Activated CD8-positive, alpha-beta memory T cell treated with anti-CD3 and anti-CD28 coated beads, Interleukin-2, amount 10 ng/mL, durations not matched to agents 7 days and 5 days (primary cell): ENCODE measurements at regions of chr9 and their contacts with region 1.

Region 1: DNA sequence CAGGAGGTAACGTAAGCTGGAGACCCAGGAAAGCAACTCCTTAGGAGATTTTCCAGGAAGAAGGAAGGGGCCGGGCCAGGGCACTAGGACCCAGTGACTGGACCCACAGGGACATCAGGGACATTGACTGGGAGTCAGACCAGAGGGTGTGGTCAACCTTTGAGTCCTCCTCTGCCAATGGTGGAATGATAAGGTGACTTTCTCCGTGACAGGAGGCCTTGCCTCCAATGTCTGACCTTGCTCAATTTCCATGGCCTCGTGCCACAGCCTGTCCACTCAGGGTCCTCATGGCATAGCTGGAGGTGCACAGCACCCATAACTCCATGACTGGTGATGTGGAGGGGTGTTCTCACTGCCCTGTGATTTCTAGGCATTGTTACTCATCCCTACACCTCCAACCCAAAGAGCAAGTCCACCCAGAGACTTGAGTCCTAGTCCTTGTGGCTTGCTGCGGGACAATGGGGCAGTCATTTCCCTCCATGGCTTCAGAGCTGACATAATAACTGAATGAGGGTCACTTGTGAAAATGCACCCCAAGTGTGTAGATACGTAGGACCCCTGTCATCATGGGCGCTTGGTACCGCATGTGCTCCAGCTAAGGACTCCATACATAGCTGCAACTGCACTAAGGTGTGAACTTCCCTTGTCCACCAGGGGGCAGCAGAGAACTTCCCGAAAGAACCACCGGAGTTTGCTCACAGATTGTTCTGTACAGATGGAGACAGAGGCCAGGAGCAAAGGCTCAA is 4.1 kb upstream of the AMBP start:
- DNase-seq: peak; percentile 86
- ATAC-seq: peak; percentile 90
- H3K4me3 Mint-ChIP-seq: no peak overlapping the region
- H3K27ac Mint-ChIP-seq: no peak overlapping the region
- H3K4me1 Mint-ChIP-seq: no peaks in the 10 kb centered on the region
- H3K27me3 Mint-ChIP-seq: peaks cover 3% of the 10 kb centered on the region

Region 2: DNA sequence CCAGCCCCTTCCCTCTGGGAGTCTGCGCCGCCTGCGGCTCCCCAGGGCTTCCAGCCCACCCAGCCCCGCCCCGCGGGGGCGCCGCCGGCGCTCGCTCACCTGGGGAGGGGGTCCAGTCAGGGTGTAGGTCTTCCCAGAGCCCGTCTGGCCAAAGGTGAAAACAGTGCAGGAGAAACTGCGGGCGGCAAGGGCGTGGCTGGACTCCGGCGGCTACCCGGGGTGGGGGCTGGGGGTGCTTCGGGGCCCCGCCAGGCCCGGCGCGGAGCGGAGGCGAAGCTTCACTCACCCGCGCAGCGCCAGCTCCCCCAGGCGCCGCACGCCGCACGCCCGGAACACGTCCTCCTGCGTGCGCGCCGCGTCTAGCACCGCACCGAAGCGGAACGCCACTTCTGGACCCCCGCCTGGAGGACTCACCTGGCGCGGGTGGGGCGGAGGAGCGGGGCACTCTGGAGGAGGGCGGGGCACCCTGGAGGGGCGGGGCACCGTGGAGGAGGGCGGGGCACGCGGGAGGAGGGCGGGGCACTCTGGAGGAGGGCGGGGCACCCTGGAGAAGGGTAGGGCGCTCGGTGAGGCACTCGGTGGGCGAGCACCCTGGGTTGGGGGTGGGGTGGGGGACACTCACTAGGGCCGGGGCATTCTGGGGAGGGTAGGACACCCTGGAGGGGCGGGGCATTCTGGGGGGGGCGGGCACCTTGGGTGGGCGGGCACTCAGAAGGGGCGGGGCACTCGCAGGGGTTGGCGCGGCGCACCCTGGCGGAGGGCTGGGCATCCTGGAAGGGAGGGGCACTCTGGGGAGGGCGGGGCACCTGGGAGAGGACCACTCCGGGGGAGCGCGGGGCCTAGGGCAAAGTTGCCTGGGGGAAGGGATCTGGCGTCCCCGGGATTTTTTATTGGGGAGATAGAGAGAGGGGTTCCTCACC is 16.1 kb after region 1 on chr9:
- CTCF ChIA-PET with region 1: interaction called, 18 read pairs
- DNase-seq: peak; percentile 44
- ATAC-seq: peak; percentile 72
- H3K4me3 Mint-ChIP-seq: no peak overlapping the region
- H3K27ac Mint-ChIP-seq: no peak overlapping the region
- H3K4me1 Mint-ChIP-seq: no peaks in the 10 kb centered on the region
- H3K27me3 Mint-ChIP-seq: peaks cover 35% of the 10 kb centered on the region

Region 3: GRCh38 chr9:114108016-114108833 is 26.0 kb after region 1 on chr9:
- CTCF ChIA-PET with region 1: interaction called, 18 read pairs
- DNase-seq: peak; percentile 71
- ATAC-seq: peak; percentile 86
- H3K4me3 Mint-ChIP-seq: no peak overlapping the region
- H3K27ac Mint-ChIP-seq: no peak overlapping the region
- H3K4me1 Mint-ChIP-seq: no peaks in the 10 kb centered on the region
- H3K27me3 Mint-ChIP-seq: peaks cover 23% of the 10 kb centered on the region

Region 4: DNA sequence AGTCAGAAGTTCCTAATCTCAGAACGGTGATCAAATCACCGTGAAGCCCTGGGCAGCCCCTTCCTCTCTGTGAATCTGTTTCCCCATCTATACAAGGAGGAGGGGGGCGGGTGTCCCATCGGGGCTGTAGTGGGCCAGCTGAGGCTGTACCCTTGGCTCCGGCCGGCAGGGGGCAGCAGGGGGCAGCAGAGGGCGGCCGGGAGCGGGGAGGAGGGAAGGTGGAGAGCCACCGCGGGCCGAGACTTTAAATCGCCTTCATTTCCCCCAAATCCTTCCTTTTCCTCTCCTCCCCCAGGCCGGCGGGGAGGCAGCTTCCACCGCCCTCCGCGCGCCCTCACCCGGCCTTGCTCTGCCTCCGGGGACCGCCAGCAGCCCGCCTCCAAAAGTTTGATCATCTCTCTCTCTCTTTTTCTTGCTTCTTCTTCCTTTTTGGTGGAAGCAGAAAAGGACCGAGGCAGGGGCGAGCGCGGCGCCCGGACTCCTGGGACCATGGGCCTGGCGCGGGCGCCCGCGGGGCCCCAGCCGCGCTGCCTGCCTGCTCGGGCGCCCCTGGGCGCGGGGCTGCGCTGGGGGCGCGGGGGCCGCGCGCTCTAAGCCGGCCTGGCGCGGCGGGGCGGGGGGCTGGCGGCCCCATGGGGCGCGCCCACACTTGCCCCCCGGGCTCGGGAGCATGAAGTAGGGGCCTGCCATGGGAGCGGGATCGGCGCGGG is 73.2 kb after region 1 on chr9 and contains the start of gene COL27A1:
- CTCF ChIA-PET with region 1: interaction called, 19 read pairs
- DNase-seq: peak; percentile 82
- ATAC-seq: peak; percentile 92
- H3K4me3 Mint-ChIP-seq: peak within 1 kb of the TSS; percentile 63
- H3K27ac Mint-ChIP-seq: peak within 1 kb of the TSS; percentile 20
- H3K4me1 Mint-ChIP-seq: peaks cover 8% of the 10 kb centered on the region
- H3K27me3 Mint-ChIP-seq: peaks cover 55% of the 10 kb centered on the region
- total RNA-seq, gene COL27A1: 0.15 to 0.30 TPM

Region 5: DNA sequence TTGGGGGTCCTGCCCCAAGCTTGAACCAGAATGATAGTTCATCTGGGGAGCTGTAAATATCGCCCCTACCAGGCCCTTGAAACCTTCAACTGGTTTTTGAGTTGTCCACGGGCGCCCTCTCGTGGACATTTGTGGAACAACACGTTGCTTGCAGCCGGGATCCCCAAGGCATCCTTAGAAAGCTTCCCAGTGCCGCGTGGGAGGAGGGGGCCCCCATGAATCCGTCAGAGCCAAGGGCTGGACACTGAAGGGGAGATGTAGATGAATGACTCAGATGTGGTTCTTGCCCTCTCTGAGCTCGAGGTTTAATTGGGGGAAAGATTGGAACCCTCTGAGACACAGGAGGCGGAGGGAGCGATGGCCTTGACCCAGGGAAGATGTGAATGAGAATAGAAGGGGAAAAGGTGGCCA is 208.9 kb after region 1 on chr9:
- CTCF ChIA-PET with region 1: interaction called, 47 read pairs
- DNase-seq: peak; percentile 72
- ATAC-seq: peak; percentile 66
- H3K4me3 Mint-ChIP-seq: no peak overlapping the region
- H3K27ac Mint-ChIP-seq: no peak overlapping the region
- H3K4me1 Mint-ChIP-seq: no peaks in the 10 kb centered on the region
- H3K27me3 Mint-ChIP-seq: peaks cover 19% of the 10 kb centered on the region